Activated B cell treated with CpG ODN at 0.5 μM for 24 hours (primary cell): ENCODE measurements at regions of chr9 and their contacts with region 1.

Region 1: GRCh38 chr9:84497495-84497894 is 156.9 kb upstream of the SLC28A3 start:
- DNase-seq: no peak
- ATAC-seq: no peak
- H3K4me3 Mint-ChIP-seq: no peak overlapping the region
- H3K27ac Mint-ChIP-seq: no peak overlapping the region
- H3K4me1 Mint-ChIP-seq: no peaks in the 10 kb centered on the region
- H3K27me3 Mint-ChIP-seq: no peaks in the 10 kb centered on the region
- CTCF ChIP-seq: no peak

Region 2: GRCh38 chr9:85431339-85432102 is 934.0 kb after region 1 on chr9:
- CTCF ChIA-PET with region 1: no interaction called
- POLR2A ChIA-PET with region 1: no interaction called
- intact Hi-C with region 1: loop called (anchors 5 kb)
- DNase-seq: no peak
- ATAC-seq: no peak
- H3K4me3 Mint-ChIP-seq: no peak overlapping the region
- H3K27ac Mint-ChIP-seq: no peak overlapping the region
- H3K4me1 Mint-ChIP-seq: no peaks in the 10 kb centered on the region
- H3K27me3 Mint-ChIP-seq: peaks cover 10% of the 10 kb centered on the region
- CTCF ChIP-seq: no peak